ENCODE measurements at regions of chr15 and their contacts with region 1.

Region 1: GRCh38 chr15:52735231-52736089 is 54.7 kb downstream of the ONECUT1 start:
- DNase-seq: peak; percentile 62 to 83
- H3K4me3 ChIP-seq: no peak overlapping the region
- H3K4me3 Mint-ChIP-seq: no peak overlapping the region
- H3K27ac Mint-ChIP-seq: no peak overlapping the region
- H3K4me1 ChIP-seq: no peaks in the 10 kb centered on the region
- H3K4me1 Mint-ChIP-seq: peaks cover 4% of the 10 kb centered on the region
- H3K27me3 ChIP-seq: no peaks in the 10 kb centered on the region
- H3K27me3 Mint-ChIP-seq: peaks cover 14% of the 10 kb centered on the region
- CTCF ChIP-seq: peak; percentile 47 to 84

Region 2: DNA sequence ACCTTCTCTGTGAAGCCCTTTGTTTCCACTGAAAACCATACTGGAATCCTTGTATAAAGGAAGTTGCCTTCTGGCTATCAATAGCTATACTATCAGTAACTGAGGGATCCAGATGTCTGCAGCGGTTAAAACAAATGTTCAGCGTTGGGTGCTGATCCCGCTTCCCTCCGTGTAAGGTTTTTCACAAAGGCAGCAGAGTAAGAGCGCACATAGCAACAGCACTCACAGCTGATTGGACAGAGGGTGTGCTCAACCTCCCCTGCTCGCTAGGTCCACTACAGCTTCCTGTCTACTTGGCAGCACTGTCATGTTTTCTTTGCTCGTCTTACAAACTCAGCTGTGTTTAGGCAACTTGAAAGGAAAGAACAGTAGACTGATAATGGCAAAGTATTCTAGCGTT is 83.6 kb before region 1 on chr15:
- CTCF ChIA-PET with region 1: no interaction called
- POLR2A ChIA-PET with region 1: no interaction called
- intact Hi-C with region 1: loop called (anchors 5 kb)
- DNase-seq: no peak
- H3K4me3 ChIP-seq: no peak overlapping the region
- H3K4me3 Mint-ChIP-seq: no peak overlapping the region
- H3K27ac Mint-ChIP-seq: no peak overlapping the region
- H3K4me1 ChIP-seq: no peaks in the 10 kb centered on the region
- H3K4me1 Mint-ChIP-seq: no peaks in the 10 kb centered on the region
- H3K27me3 ChIP-seq: no peaks in the 10 kb centered on the region
- H3K27me3 Mint-ChIP-seq: no peaks in the 10 kb centered on the region
- CTCF ChIP-seq: no peak

Region 3: DNA sequence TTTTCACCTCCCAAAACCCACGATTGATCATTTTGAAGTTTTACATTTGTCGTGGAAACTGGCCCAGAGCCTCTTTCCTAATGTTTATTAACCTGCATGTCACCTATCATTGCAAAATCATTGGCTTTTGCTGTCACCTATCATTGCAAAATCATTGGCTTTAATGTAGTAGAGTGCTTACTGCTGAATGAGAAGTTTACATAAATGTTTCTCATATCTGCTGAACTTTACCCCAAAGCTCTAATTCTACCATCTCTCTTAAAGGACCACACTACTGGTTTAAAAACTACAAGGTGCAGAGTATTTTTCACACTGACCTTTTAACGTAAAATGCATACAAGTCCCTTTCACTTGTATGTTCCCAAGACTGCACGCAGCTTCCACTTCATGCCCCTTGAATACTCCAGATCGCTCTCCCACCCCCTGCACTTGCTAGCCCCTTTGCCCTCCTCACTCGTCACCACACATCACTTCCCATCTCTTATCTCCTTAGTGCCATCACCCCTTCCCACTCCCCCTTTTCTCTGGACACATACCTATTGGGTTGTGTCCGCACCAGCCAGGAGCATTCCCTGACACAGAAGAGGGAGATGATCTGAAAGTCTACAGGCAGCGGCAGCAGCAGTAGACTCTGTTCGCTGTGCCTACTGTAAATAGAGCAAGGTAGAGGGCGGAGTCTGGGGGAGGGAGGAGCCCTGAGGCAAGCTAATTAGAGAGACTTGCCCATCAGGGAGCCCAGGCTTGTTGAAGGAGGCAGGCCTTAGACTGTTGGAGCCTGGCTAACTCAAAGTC is 26.1 kb before region 1 on chr15:
- CTCF ChIA-PET with region 1: no interaction called
- POLR2A ChIA-PET with region 1: no interaction called
- intact Hi-C with region 1: no loop called
- DNase-seq: peak; percentile 75 to 81
- H3K4me3 ChIP-seq: peak overlapping the region; percentile 32
- H3K4me3 Mint-ChIP-seq: peak overlapping the region; percentile 67
- H3K27ac Mint-ChIP-seq: no peak overlapping the region
- H3K4me1 ChIP-seq: peaks cover 11% of the 10 kb centered on the region; the same call in 1 of the 2 replicates
- H3K4me1 Mint-ChIP-seq: peaks cover 7% of the 10 kb centered on the region
- H3K27me3 ChIP-seq: no peaks in the 10 kb centered on the region
- H3K27me3 Mint-ChIP-seq: no peaks in the 10 kb centered on the region
- CTCF ChIP-seq: no peak

Region 4: DNA sequence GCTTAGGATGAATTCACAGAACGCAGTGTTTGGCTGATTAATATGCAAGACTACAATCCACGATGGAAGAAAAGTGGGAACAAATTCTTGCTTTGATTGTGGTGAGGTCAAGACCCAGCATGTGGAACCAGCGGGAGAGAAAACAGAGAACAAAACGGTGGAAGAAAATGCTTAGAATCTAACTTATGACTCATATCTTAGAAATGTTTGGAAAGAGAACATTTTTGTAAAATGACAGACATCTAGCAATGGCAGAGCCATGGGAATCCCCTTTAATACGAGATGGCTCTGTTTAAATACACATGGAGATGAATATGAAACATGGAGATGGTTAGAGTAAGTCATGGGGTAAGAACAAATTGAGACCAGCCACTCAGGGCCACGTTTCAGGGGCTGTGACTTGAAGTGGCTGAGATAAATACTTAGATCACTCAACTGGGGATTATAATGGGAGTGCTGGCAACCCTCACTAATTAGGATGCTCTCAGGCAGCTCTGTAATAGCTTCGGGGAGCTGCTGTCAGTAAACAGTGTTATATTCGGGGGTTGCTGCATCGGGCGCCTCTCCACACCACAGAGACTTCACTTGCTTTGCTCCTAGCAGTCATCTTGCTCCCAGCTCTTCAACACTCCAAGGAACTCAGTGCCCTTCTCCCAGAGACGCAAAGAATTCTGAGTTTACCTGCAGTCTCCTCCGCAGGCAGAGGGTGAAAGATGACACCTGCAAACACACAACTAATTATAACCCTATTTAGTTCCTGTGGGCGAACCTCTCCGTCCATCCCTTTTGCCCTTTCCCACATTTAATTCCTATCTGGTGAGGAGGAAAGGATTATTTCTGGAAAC is 122.7 kb after region 1 on chr15:
- CTCF ChIA-PET with region 1: no interaction called
- POLR2A ChIA-PET with region 1: no interaction called
- intact Hi-C with region 1: no loop called
- DNase-seq: no peak
- H3K4me3 ChIP-seq: no peak overlapping the region
- H3K4me3 Mint-ChIP-seq: no peak overlapping the region
- H3K27ac Mint-ChIP-seq: no peak overlapping the region
- H3K4me1 ChIP-seq: no peaks in the 10 kb centered on the region
- H3K4me1 Mint-ChIP-seq: no peaks in the 10 kb centered on the region
- H3K27me3 ChIP-seq: no peaks in the 10 kb centered on the region
- H3K27me3 Mint-ChIP-seq: peaks cover 3% of the 10 kb centered on the region
- CTCF ChIP-seq: no peak

Measured in Caco-2 (cell line).